Uterus (tissue), 4 donors: ENCODE measurements at regions of chr11 and their contacts with region 1.

Region 1: GRCh38 chr11:111836721-111837120 is 34.7 kb downstream of the ALG9 start:
- DNase-seq: no peak
- H3K4me3 ChIP-seq: no peak overlapping the region
- H3K27ac ChIP-seq: no peak overlapping the region
- H3K4me1 ChIP-seq: peaks cover 0 to 3% of the 10 kb centered on the region in 2 donors
- H3K27me3 ChIP-seq: no peaks in the 10 kb centered on the region
- CTCF ChIP-seq: no peak
- POLR2A ChIP-seq: no peak

Region 2: DNA sequence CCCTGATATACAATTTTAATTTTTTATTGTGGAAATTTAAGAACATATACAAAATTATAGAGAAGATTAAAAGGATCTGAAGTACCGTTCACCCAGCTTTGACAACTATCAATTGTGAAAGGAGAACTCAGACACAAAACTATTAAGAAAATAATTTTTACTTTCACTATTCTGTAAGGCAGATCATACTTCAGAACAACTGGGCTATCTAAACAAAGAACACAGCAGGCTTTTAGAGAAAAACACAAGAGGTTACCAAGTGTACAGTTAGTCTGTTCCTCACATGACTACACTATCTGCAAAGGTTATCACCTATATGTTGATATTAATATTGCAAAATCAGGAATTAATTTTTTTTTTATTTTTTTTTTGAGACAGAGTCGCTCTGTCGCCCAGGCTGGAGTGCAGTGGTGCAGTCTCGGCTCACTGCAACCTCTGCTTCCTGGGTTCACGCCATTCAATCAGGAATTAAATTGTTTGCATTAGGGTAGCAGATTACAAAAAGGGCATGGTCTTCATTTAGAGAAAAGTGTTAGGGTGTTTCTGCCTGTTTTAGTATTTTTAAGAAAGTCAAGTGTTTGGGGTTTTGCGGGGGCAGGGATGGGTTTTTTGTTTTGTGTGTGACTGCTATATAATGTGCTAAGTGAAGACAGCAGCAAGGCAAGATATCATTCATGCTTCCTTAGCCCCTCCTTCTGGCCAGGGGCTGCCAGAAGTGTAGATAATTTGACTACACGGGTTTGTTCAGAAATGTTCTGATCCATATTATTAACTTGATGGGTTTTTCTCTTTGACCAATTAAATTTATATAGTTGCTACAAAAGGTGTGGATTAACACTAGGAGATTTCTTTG is 262.1 kb before region 1 on chr11:
- intact Hi-C with region 1: loop called (anchors 10 kb)
- DNase-seq: no peak
- H3K4me3 ChIP-seq: no peak overlapping the region
- H3K27ac ChIP-seq: peak overlapping the region; percentile 48 to 53
- H3K4me1 ChIP-seq: no peaks in the 10 kb centered on the region
- H3K27me3 ChIP-seq: no peaks in the 10 kb centered on the region
- CTCF ChIP-seq: no peak
- POLR2A ChIP-seq: no peak

Region 3: DNA sequence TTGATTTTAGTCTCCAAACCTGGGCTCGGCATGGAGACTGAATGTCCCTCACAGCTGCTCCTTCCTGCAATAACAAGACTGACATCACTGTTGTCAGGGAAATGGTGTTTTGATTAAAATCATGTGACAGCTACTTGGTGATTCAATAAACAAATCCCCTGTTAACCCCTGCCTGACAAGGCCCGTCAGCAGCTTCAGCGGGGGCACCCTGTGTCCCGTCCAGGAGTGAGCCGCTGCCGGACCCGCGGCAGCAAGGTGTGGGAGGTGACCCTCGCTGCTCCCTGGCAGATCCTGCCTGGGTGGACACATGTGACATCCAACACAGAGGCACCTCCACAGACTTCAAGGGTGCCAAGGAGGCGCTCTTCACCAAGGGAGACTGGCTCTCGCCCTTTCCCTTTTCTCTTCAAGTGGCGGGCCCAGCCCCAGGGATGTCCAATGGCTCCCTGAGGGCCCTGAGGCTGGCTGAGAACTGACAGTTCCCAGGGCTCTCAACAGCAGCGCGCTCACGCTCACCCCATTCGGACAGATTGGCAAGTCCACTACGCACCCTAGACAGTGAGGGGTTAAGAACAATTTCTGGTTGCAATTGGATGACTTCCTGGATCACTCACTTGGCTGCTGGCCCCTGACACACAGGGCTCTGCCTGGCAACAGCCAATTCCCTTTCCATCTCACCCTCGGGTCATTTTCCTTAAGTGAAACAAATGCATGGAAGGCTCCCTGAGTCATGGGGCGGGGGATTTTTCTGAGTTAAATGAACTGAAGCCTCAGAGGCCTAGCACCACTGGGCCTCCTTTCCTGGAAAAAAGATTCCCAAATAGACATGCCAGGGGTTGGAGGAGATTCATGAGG is 101.2 kb before region 1 on chr11:
- intact Hi-C with region 1: no loop called
- DNase-seq: peak; percentile 82 to 90
- H3K4me3 ChIP-seq: peak overlapping the region; percentile 26 to 37
- H3K27ac ChIP-seq: peak overlapping the region; percentile 93 to 95
- H3K4me1 ChIP-seq: peaks cover 22 to 29% of the 10 kb centered on the region in 2 donors
- H3K27me3 ChIP-seq: no peaks in the 10 kb centered on the region
- CTCF ChIP-seq: no peak
- POLR2A ChIP-seq: peak; percentile 17 to 57

Region 4: DNA sequence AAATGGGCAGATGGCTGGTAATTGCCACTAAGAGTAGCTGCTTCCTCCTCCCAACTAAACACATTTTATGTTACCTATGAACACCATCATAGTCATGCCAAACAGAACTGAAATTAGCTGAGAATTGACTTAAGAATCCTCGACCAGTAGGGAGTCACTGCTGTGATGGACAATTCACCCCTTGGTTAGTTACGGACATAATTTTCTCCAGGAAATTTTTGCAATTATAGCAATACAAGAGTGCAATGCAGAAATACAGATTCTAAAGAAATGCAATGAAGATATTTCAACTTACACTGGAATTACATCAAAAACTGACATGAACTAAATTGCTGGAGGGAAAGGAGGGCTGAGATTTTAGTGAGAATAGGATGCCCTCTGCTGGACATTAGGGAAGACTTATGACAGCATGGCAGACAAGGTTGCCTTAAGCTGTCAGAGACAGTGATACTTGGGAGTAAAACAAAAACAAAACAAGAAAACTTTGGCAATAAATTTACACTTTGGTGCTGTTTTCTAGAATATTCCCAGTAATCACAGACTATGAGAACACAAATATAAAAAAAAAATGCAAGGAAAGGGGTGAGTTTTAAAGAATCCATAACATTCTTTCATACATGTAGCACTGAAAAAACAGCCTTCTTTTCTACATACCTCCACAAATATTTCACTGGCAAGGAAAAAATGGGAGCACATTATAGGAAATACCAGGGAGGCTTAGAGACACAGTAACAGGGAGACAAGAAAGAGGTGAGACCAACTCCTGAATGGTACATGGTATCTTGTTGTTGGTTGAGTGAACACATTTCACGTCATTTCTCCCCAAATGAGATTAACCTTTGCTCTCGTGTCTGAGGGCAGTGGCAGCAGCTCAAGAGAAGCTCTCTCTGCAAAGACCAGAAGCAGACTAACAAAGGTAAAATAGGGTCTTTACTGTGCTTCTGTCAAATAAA is 59.4 kb before region 1 on chr11:
- intact Hi-C with region 1: loop called (anchors 10 kb)
- DNase-seq: peak in 1 of 2 donors; percentile 49
- H3K4me3 ChIP-seq: no peak overlapping the region
- H3K27ac ChIP-seq: no peak overlapping the region
- H3K4me1 ChIP-seq: peaks cover 0 to 6% of the 10 kb centered on the region in 2 donors
- H3K27me3 ChIP-seq: no peaks in the 10 kb centered on the region
- CTCF ChIP-seq: peak; percentile 76 to 93 (median 86)
- POLR2A ChIP-seq: no peak

Region 5: GRCh38 chr11:112082729-112083128 is 246.0 kb after region 1 on chr11:
- intact Hi-C with region 1: no loop called
- DNase-seq: no peak
- H3K4me3 ChIP-seq: no peak overlapping the region
- H3K27ac ChIP-seq: no peak overlapping the region
- H3K4me1 ChIP-seq: peaks cover 0 to 4% of the 10 kb centered on the region in 2 donors
- H3K27me3 ChIP-seq: no peaks in the 10 kb centered on the region
- CTCF ChIP-seq: no peak
- POLR2A ChIP-seq: no peak